ENCODE measurements at regions of chr12 and their contacts with region 1.

Region 1: DNA sequence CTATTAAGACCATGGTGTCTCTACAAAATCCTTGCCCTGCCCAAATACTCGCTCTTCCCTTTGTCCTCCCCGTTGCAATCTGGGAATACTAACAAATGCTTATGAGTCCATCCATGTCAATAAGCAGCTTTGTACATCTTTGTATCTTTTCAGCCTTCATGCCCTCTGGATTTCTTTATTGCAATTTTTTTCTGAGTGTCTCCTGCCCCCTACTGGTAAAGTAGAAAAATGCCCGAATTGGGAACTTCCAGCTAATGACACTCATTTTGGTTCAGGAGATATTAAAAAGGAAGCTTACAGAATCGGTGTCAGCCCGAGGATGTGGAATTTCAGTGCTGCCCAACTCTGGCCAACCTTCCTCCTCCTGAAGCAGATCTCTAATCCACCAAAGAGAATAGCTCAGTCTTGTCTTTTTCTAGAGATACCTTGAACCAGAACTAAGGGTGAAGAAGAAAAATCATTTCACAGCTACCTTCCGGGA is 46.0 kb downstream of the SH2B3 start:
- DNase-seq: no peak
- ATAC-seq: no peak
- H3K4me3 Mint-ChIP-seq: no peak overlapping the region
- H3K27ac Mint-ChIP-seq: peak overlapping the region; percentile 67; the same call in 1 of the 2 replicates
- H3K4me1 Mint-ChIP-seq: peaks cover under 1% of the 10 kb centered on the region; the same call in 1 of the 2 replicates
- H3K27me3 Mint-ChIP-seq: no peaks in the 10 kb centered on the region
- CTCF ChIP-seq: peak; percentile 75

Region 2: DNA sequence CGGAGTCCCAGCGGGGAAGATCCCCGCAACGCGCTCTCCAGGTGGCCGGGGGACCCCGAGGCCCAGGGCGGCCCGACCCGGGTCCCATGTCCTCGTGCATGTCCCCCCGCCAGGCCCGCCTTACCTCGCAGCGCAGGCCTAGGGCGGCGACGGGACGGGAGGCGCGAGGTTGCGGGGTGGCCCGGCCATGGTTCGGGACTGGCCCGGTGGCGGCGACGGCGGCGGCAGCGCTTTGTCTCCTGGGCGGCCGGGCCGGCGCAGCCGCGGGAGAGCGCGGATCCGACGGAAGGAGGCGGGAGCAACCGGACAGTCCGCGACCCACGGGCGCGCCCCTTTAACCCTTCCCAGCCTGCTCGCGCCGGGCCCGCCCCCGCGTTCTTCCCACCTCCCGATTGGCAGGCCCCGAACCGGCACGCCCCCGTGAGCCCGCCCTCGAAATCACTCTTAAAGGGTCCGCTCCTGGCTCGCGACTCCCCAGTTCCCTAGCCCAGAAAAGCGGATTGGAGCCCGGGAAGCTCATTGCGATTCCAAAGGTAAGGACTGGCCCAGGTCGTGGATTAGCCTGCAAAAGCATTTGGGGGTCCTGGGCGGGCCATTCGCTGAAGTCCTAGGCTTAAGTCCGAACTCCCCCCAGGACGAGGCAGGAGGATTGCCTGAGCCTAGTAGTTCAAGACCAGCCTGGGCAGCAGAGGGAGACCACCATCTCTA is 82.7 kb before region 1 on chr12 and contains the start of gene PHETA1:
- CTCF ChIA-PET with region 1: interaction called, 19 read pairs
- POLR2A ChIA-PET with region 1: no interaction called
- DNase-seq: peak; percentile 95
- ATAC-seq: peak; percentile 94
- H3K4me3 Mint-ChIP-seq: peak within 1 kb of the TSS; percentile 72
- H3K27ac Mint-ChIP-seq: 0 out of 2 replicates have a peak within 1 kb of the TSS, but pooled peaks have one; percentile 27
- H3K4me1 Mint-ChIP-seq: peaks cover 10% of the 10 kb centered on the region
- H3K27me3 Mint-ChIP-seq: peaks cover 30% of the 10 kb centered on the region
- CTCF ChIP-seq: no peak
- total RNA-seq, gene PHETA1: 12.4 to 18.6 TPM (median 14.9 TPM) in 3 replicates

Region 3: DNA sequence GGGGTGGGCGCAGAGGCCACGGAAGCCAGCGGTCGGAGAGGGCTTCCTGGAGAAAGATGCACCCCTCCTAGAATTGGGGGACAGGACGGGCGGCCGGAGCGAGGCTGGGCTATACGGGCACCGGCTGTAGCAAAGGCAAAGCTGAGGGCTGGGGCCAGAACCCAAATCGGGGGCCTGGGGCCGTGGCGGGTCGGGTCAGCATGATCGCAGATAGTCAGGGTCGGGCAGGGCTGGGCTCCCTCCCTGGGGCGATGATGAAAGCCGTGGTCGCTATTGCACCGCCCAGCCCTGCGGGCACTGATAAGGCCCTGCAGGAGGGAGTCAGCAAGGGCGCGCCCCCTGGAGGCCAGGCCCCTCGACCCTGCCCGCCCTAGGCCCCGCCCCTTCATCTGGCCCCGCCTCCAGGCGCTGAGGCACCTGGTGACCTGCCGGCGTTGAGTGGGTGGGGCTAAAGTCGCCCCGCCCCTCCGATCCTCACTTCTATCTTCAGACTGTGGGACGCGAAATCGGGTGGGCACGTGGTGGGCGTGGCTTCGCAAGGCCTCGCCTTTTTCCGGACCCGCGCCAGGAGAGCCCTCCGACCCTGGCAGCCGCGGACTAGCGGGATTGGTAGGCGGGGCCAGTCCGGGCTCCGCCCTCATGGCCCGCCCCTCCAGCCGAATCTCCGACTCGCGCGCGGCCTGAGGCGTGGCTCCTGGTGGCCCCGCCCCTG is 46.4 kb before region 1 on chr12:
- CTCF ChIA-PET with region 1: interaction called, 116 read pairs
- POLR2A ChIA-PET with region 1: interaction called, 5 read pairs
- DNase-seq: peak; percentile 100
- ATAC-seq: peak; percentile 86
- H3K4me3 Mint-ChIP-seq: peak overlapping the region; percentile 78
- H3K27ac Mint-ChIP-seq: no peak overlapping the region
- H3K4me1 Mint-ChIP-seq: peaks cover 47% of the 10 kb centered on the region
- H3K27me3 Mint-ChIP-seq: 0 out of 2 replicates have a peak, but pooled peaks cover 2% of the 10 kb centered on the region
- CTCF ChIP-seq: peak; percentile 35; the same call in 1 of the 2 replicates

Region 4: GRCh38 chr12:111412007-111412829 is 39.5 kb before region 1 on chr12:
- CTCF ChIA-PET with region 1: interaction called, 48 read pairs
- POLR2A ChIA-PET with region 1: interaction called, 3 read pairs
- DNase-seq: peak; percentile 63
- ATAC-seq: peak; percentile 73
- H3K4me3 Mint-ChIP-seq: peak overlapping the region; percentile 11; the same call in 1 of the 2 replicates
- H3K27ac Mint-ChIP-seq: peak overlapping the region; percentile 58
- H3K4me1 Mint-ChIP-seq: peaks cover 67% of the 10 kb centered on the region
- H3K27me3 Mint-ChIP-seq: no peaks in the 10 kb centered on the region
- CTCF ChIP-seq: no peak

Region 5: GRCh38 chr12:111424793-111425251 is 26.9 kb before region 1 on chr12:
- CTCF ChIA-PET with region 1: interaction called, 24 read pairs
- POLR2A ChIA-PET with region 1: interaction called, 4 read pairs
- DNase-seq: no peak
- ATAC-seq: peak; percentile 82
- H3K4me3 Mint-ChIP-seq: no peak overlapping the region
- H3K27ac Mint-ChIP-seq: peak overlapping the region; percentile 57
- H3K4me1 Mint-ChIP-seq: peaks cover 45% of the 10 kb centered on the region
- H3K27me3 Mint-ChIP-seq: no peaks in the 10 kb centered on the region
- CTCF ChIP-seq: 0 out of 2 replicates have a peak, but pooled peaks have one; percentile 11

Region 6: GRCh38 chr12:111434680-111435338 is 16.9 kb before region 1 on chr12:
- CTCF ChIA-PET with region 1: interaction called, 35 read pairs
- POLR2A ChIA-PET with region 1: interaction called, 6 read pairs
- DNase-seq: no peak
- ATAC-seq: peak; percentile 10
- H3K4me3 Mint-ChIP-seq: peak overlapping the region; percentile 4; the same call in 1 of the 2 replicates
- H3K27ac Mint-ChIP-seq: peak overlapping the region; percentile 95
- H3K4me1 Mint-ChIP-seq: peaks cover 56% of the 10 kb centered on the region
- H3K27me3 Mint-ChIP-seq: no peaks in the 10 kb centered on the region
- CTCF ChIP-seq: no peak

Region 7: GRCh38 chr12:111462210-111462769 is 10.6 kb after region 1 on chr12:
- CTCF ChIA-PET with region 1: interaction called, 15 read pairs
- POLR2A ChIA-PET with region 1: no interaction called
- DNase-seq: no peak
- ATAC-seq: no peak
- H3K4me3 Mint-ChIP-seq: no peak overlapping the region
- H3K27ac Mint-ChIP-seq: peak overlapping the region; percentile 85; the same call in 1 of the 2 replicates
- H3K4me1 Mint-ChIP-seq: no peaks in the 10 kb centered on the region
- H3K27me3 Mint-ChIP-seq: no peaks in the 10 kb centered on the region
- CTCF ChIP-seq: no peak

Region 8: GRCh38 chr12:111488271-111488670 is 36.6 kb after region 1 on chr12:
- CTCF ChIA-PET with region 1: no interaction called
- POLR2A ChIA-PET with region 1: no interaction called
- DNase-seq: no peak
- ATAC-seq: no peak
- H3K4me3 Mint-ChIP-seq: no peak overlapping the region
- H3K27ac Mint-ChIP-seq: no peak overlapping the region
- H3K4me1 Mint-ChIP-seq: no peaks in the 10 kb centered on the region
- H3K27me3 Mint-ChIP-seq: no peaks in the 10 kb centered on the region
- CTCF ChIP-seq: no peak